CD8-positive, alpha-beta memory T cell (primary cell): ENCODE measurements at regions of chr12 and their contacts with region 1.

Region 1: GRCh38 chr12:4604684-4605193 is 42.7 kb downstream of the DYRK4 start:
- DNase-seq: peak; percentile 60 to 81 (median 68)
- H3K4me3 ChIP-seq: peak overlapping the region; percentile 99
- H3K4me3 Mint-ChIP-seq: peak overlapping the region; percentile 92 to 100 (median 99)
- H3K27ac ChIP-seq: peak overlapping the region; percentile 58
- H3K27ac Mint-ChIP-seq: peak overlapping the region; percentile 0 to 96 (median 94)
- H3K4me1 ChIP-seq: peaks cover 9% of the 10 kb centered on the region
- H3K4me1 Mint-ChIP-seq: peaks cover 29 to 47% (median 45%) of the 10 kb centered on the region in 3 donors
- H3K27me3 ChIP-seq: peaks cover 4% of the 10 kb centered on the region
- H3K27me3 Mint-ChIP-seq: peaks cover 5 to 18% of the 10 kb centered on the region in 2 donors

Region 2: GRCh38 chr12:4591180-4591687 is 13.5 kb before region 1 on chr12:
- CTCF ChIA-PET with region 1: interaction called, 11 read pairs
- POLR2A ChIA-PET with region 1: interaction called, 4 read pairs
- DNase-seq: no peak
- H3K4me3 ChIP-seq: no peak overlapping the region
- H3K4me3 Mint-ChIP-seq: no peak overlapping the region
- H3K27ac ChIP-seq: no peak overlapping the region
- H3K27ac Mint-ChIP-seq: peak overlapping the region in 1 of 8 donors; percentile 61
- H3K4me1 ChIP-seq: no peaks in the 10 kb centered on the region
- H3K4me1 Mint-ChIP-seq: no peaks in the 10 kb centered on the region
- H3K27me3 ChIP-seq: no peaks in the 10 kb centered on the region
- H3K27me3 Mint-ChIP-seq: peaks cover 4 to 19% of the 10 kb centered on the region in 2 donors